HEK293T (cell line): ENCODE measurements at regions of chr17 and their contacts with region 1.

Region 1: DNA sequence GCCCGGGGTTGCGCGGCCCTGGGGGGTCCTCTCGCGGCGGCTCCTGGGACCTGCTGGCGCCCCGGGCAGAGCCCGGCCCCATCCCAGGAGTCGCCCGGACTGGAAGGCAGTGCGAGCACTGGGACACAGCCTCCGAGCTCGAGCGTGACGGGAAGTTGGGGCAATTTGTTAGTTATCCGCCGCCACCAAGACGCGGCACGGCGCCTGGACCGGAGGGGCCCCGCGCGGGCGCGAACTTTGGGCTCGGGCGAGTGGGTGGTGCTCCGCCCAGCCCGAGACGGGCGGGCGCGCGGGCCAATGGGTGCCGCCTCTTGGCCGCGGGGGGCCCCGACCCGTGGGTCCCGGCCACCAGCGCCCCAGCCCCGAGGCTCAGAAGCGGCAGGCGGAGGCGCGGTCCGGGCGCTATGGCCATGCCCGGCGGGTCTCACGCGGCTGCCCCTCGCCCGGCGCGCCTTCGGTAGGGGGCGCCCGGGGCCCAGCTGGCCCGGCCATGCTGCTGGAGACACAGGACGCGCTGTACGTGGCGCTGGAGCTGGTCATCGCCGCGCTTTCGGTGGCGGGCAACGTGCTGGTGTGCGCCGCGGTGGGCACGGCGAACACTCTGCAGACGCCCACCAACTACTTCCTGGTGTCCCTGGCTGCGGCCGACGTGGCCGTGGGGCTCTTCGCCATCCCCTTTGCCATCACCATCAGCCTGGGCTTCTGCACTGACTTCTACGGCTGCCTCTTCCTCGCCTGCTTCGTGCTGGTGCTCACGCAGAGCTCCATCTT is at the start of gene ADORA2B:
- DNase-seq: peak; percentile 81

Region 2: DNA sequence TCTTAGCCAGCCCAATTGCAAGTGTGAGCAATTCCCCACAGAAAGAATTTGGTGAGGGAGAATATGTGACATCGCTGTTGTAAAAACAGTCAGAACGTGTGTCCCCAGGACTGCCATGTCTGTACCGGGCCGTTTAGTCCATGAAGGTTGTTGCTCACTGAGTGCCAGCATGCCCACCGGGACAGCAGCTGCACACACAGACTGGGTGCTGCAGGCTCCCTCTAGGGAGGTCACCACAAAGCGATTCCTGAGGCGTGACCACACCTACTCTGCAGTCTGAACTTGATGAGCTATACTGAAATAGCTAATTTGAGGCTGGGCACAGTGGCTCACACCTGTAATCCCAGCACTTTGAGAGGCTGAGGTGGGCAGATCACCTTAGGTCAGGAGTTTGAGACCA is 44.1 kb before region 1 on chr17:
- CTCF ChIA-PET with region 1: no interaction called
- POLR2A ChIA-PET with region 1: no interaction called
- DNase-seq: no peak

Region 3: GRCh38 chr17:15920758-15921239 is 24.1 kb before region 1 on chr17:
- CTCF ChIA-PET with region 1: interaction called, 11 read pairs
- POLR2A ChIA-PET with region 1: interaction called, 3 read pairs
- DNase-seq: peak; percentile 35

Region 4: GRCh38 chr17:15930426-15930825 is 14.5 kb before region 1 on chr17:
- CTCF ChIA-PET with region 1: interaction called, 10 read pairs
- POLR2A ChIA-PET with region 1: interaction called, 21 read pairs
- DNase-seq: no peak

Region 5: DNA sequence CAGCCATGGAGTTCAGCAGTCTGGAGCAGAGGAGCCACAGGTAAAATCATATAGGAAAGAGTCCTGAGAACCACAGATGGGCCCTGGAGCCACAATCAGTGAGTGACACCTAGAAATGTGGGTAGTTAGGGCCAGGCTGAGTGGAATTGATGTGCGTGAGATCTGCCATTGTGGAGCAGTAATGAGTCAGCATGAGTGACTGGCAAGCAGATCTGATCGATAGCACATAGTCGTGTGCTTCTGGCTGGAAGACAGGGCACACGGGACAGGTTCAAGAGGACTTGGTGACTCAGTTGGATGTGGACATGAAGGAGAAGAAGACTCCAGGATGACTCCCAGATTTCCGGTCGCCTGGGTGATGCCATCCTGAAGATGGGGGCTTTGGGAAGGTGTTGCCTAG is 12.3 kb after region 1 on chr17:
- CTCF ChIA-PET with region 1: interaction called, 10 read pairs
- POLR2A ChIA-PET with region 1: interaction called, 15 read pairs
- DNase-seq: no peak

Region 6: GRCh38 chr17:15966183-15966878 is 21.4 kb after region 1 on chr17:
- CTCF ChIA-PET with region 1: interaction called, 14 read pairs
- POLR2A ChIA-PET with region 1: interaction called, 12 read pairs
- DNase-seq: no peak

Region 7: DNA sequence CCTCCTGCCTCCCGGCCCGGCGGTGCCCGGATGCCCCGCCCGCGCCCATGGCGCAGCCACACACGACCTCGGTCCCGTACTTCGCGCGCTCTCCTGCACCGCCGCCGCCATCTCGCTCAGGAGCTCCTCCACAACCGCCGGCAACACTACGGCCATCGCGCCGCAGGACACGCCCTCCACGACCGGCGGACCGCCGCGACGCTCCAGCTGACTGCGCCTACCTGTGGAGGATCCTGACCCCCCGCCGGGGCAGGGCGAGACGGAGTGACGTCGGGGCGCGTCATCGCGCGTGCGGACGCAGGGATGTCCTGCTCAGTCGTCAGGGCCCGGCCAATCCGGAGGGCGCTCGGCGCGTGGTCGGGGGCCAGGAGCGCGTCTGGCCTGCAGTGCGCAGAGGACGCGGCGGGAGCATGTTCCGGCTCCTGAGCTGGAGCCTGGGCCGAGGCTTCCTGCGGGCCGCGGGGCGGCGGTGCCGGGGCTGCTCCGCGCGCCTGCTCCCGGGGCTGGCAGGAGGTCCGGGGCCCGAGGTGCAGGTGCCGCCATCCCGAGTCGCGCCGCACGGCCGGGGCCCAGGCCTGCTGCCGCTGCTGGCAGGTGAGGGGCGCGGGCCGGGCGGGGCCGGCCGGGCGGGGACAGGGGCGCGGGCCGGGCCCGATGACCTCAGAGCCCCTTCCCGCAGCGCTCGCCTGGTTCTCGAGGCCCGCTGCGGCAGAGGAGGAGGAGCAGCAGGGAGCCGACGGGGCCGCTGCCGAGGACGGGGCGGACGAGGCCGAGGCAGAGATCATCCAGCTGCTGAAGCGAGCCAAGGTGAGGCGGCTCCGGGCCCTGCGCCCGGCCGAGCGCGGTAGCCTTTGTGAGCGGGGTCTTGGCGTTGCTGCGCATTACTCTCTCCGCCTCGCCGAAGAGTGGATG is 54.8 kb after region 1 on chr17 and contains the starts of genes TTC19 and ZSWIM7:
- CTCF ChIA-PET with region 1: interaction called, 5 read pairs
- POLR2A ChIA-PET with region 1: interaction called, 74 read pairs
- DNase-seq: peak; percentile 95

Region 8: DNA sequence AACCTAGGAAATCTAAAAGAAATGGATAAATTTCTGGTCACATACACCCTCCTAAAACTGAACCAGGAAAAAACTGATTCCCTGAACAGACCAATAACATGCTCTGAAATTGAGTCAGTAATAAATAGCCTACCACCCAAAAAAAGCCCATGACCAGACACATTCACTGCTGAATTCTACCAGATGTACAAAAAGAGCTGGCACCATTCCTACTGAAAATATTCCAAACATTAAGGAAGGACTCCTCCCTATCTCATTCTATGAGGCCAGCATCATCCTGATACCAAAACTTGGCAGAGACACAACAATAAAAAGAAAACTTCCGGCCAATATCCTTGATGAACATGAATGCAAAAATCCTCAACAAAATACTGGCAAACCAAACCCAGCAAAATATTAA is 107.5 kb after region 1 on chr17:
- CTCF ChIA-PET with region 1: no interaction called
- POLR2A ChIA-PET with region 1: no interaction called
- DNase-seq: no peak

Region 9: GRCh38 chr17:16818821-16819683 is 874.1 kb after region 1 on chr17:
- CTCF ChIA-PET with region 1: no interaction called
- POLR2A ChIA-PET with region 1: no interaction called
- DNase-seq: no peak